Endothelial cell of umbilical vein (primary cell): ENCODE measurements at regions of chr20 and their contacts with region 1.

Region 1: DNA sequence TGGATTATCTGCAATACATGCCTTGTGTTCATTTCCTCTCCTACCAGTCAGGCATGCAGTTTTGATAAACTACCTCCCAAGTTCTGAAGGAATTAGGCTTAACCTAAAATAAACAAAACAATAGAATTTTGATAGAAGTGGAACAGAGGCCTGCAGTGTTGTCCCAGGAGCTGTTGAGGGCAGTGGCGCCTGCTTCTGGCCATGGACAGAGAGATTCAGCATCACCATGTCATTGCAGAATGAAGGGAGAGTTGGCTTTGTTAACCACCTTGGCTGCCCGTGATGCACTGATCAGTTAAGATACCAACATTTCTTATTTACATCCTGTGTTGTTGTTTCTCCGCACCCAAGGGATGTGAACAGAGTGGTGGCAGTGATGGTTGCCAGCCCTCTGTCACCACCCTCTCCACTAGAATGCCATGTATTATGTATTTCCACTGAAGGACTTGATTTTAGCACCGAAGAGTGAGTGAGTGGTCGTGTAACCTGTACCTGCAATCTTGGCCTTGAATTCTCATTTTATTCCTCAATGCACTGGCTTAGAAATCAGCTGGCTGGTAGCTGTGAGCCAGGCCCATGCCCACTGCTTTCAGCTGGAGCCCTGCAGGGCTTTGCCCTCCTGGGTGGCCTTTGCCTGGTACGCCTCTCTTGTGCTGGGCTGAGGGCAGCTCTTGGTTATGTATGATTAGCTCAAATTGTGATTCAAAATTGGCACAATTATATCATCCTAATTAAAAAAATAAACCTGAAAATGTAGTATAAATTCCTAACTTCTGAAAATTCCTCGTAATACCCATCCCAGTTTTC is 56.5 kb downstream of the SHLD1 start:
- DNase-seq: peak; percentile 11
- H3K4me3 ChIP-seq: no peak overlapping the region
- H3K27ac ChIP-seq: no peak overlapping the region
- H3K4me1 ChIP-seq: peaks cover 14% of the 10 kb centered on the region
- H3K27me3 ChIP-seq: no peaks in the 10 kb centered on the region
- CTCF ChIP-seq: peak; percentile 15
- POLR2A ChIP-seq: no peak

Region 2: GRCh38 chr20:5835321-5835821 is 28.7 kb after region 1 on chr20:
- CTCF ChIA-PET with region 1: interaction called, 4 read pairs
- POLR2A ChIA-PET with region 1: no interaction called
- dilution Hi-C with region 1: no loop called
- intact Hi-C with region 1: loop called (anchors 2 kb)
- DNase-seq: peak; percentile 82
- H3K4me3 ChIP-seq: no peak overlapping the region
- H3K27ac ChIP-seq: peak overlapping the region; percentile 36
- H3K4me1 ChIP-seq: peaks cover 14% of the 10 kb centered on the region
- H3K27me3 ChIP-seq: no peaks in the 10 kb centered on the region
- CTCF ChIP-seq: no peak
- POLR2A ChIP-seq: no peak

Region 3: DNA sequence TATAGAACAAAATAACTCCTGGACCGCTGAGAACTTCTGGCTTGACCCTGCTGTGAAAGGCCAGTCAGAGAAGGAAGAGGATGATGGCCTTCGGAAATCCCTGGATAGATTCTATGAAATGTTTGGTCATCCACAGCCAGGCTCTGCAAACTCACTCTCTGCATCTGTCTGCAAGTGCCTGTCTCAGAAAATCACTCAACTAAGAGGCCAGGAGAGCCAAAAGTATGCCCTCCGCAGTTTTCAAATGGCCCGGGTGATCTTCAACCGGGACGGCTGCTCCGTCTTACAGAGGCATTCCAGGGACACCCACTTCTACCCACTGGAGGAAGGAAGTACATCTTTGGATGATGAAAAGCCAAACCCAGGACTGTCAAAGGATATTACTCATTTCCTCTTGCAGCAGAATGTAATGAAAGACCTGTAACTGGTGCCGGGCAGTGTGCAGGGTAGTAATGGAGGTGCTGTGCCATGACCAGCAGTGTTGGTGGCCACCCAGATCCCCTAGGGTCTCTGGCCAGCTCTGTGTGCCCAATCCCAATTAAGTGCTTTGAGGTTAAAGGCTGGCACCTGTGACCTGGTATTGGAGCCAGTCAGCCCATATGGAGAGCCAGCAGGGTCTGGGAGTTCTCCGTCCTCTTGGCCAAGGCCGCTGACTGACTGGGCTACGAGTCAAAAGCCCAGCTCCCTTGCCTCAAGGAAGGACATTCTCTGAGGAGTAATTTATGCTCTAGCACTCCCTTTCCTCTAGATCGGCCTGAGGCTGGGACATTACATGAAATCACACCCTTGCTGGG is 56.6 kb after region 1 on chr20:
- CTCF ChIA-PET with region 1: no interaction called
- POLR2A ChIA-PET with region 1: no interaction called
- dilution Hi-C with region 1: no loop called
- intact Hi-C with region 1: loop called (anchors 2 kb)
- DNase-seq: peak; percentile 50
- H3K4me3 ChIP-seq: peak overlapping the region in 1 of 3 experiments; percentile 12
- H3K27ac ChIP-seq: peak overlapping the region; percentile 62
- H3K4me1 ChIP-seq: peaks cover 34% of the 10 kb centered on the region
- H3K27me3 ChIP-seq: no peaks in the 10 kb centered on the region
- CTCF ChIP-seq: no peak
- POLR2A ChIP-seq: no peak